Upper lobe of right lung (tissue), 1 donor: ENCODE measurements at regions of chr10 and their contacts with region 1.

Region 1: DNA sequence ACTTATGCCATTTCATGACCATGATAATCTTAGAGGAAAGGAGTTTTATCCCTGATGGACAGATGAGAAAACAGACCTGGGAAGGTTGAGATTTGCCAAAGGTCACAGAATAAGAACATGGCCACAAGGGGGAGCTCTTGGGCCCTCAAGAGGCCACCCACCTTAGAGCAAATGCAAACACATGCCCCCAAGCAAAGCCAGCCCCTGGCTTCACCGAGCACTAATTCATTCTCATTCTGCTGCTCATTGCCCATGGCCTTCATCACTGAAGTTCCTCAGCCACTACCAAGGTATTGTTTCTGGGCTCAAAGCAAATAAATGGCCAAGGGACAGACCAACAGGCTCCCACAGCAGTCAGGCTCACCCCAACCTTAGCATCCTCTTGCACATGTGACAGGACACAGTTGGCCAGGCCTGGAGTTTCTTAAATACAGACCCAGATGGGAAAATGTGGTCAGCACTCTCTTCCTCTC is 44.2 kb downstream of the PDLIM1 start:
- DNase-seq: peak; percentile 67
- ATAC-seq: peak; percentile 76
- H3K4me3 ChIP-seq: no peak overlapping the region
- H3K27ac ChIP-seq: no peak overlapping the region
- H3K4me1 ChIP-seq: peaks cover 35% of the 10 kb centered on the region
- H3K27me3 ChIP-seq: no peaks in the 10 kb centered on the region
- CTCF ChIP-seq: peak; percentile 85

Region 2: GRCh38 chr10:95273393-95274312 is 27.0 kb after region 1 on chr10:
- intact Hi-C with region 1: no loop called
- DNase-seq: no peak
- ATAC-seq: peak; percentile 72
- H3K4me3 ChIP-seq: no peak overlapping the region
- H3K27ac ChIP-seq: peak overlapping the region; percentile 67
- H3K4me1 ChIP-seq: peaks cover 58% of the 10 kb centered on the region
- H3K27me3 ChIP-seq: no peaks in the 10 kb centered on the region
- CTCF ChIP-seq: no peak

Region 3: DNA sequence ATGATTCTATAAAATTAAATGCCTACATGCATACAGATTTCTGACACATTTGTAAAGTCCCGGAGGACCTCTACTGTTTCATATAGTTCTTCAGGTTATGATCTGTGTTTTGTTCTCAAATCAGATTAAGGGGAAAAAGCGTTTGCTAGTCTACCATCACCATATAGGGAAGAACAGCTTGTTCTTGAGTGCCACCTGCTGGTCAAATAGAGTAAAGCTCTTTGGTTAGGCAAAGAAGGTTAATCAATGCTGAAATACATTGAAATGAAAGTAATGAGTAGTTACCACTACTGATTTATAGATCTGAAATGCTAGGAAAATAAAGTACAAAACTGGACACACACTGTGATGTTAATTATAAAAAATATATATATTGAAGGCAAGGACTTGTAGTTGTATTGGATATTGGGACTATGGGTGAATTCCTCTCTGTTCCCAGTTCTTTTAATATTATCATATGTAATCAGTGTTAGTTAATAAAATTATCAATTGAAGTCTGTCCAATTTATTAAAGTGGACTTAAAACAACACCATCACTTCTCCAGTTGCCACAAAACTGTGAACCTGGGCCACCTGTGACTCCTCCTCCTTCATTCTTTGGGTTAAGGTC is 116.8 kb after region 1 on chr10:
- intact Hi-C with region 1: loop called (anchors 5 kb)
- DNase-seq: no peak
- ATAC-seq: peak; percentile 84
- H3K4me3 ChIP-seq: no peak overlapping the region
- H3K27ac ChIP-seq: no peak overlapping the region
- H3K4me1 ChIP-seq: peaks cover 7% of the 10 kb centered on the region
- H3K27me3 ChIP-seq: no peaks in the 10 kb centered on the region
- CTCF ChIP-seq: peak; percentile 94

Region 4: DNA sequence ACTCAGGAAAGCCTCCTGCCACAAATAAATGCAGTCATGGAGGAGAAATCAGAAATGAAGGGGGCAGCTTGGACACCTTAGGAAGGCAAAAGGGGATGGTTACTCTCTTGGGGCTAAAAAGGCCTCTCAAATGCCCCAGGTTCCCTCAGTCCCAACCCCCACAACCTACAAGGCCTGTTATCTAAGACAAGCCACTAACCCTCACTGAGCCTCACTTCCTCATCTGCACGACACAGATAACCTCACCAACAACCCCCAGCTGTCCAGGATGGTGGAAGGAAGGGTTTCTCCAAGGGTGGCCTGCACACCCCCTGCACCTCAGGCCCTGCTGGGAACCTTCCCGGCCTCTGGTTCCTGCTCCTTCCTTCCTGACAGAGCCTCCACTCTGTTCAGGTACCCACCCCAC is 285.4 kb after region 1 on chr10:
- intact Hi-C with region 1: no loop called
- DNase-seq: no peak
- ATAC-seq: peak; percentile 23
- H3K4me3 ChIP-seq: no peak overlapping the region
- H3K27ac ChIP-seq: no peak overlapping the region
- H3K4me1 ChIP-seq: peaks cover 14% of the 10 kb centered on the region
- H3K27me3 ChIP-seq: no peaks in the 10 kb centered on the region
- CTCF ChIP-seq: no peak